K562 (cell line): ENCODE measurements at regions of chr3 and their contacts with region 1.

Region 1: GRCh38 chr3:36700537-36701248 is 63.7 kb downstream of the DCLK3 start:
- DNase-seq: peak; percentile 51 to 77 (median 62)
- ATAC-seq: peak; percentile 97
- H3K4me3 ChIP-seq: no peak overlapping the region
- H3K27ac ChIP-seq: no peak overlapping the region
- H3K4me1 ChIP-seq: no peaks in the 10 kb centered on the region
- H3K27me3 ChIP-seq: peaks cover 0 to 9% of the 10 kb centered on the region in 2 experiments; a peak in 1 of 5 replicates
- CTCF ChIP-seq: peak; percentile 75 to 95 (median 93)
- EP300 ChIP-seq: no peak
- POLR2A ChIP-seq: no peak
- RAD21 ChIP-seq: peak; percentile 96 to 97

Region 2: GRCh38 chr3:35965908-35966307 is 734.8 kb before region 1 on chr3:
- CTCF ChIA-PET with region 1: interaction called, 4 read pairs
- POLR2A ChIA-PET with region 1: no interaction called
- in situ Hi-C with region 1: no loop called
- intact Hi-C with region 1: loop called (anchors 5 kb)
- DNase-seq: no peak
- ATAC-seq: no peak
- H3K4me3 ChIP-seq: no peak overlapping the region
- H3K27ac ChIP-seq: no peak overlapping the region
- H3K4me1 ChIP-seq: no peaks in the 10 kb centered on the region
- H3K27me3 ChIP-seq: no peaks in the 10 kb centered on the region
- CTCF ChIP-seq: 0 out of 6 replicates have a peak, but pooled peaks of 1 of the 3 experiments have one; percentile 6
- EP300 ChIP-seq: no peak
- POLR2A ChIP-seq: no peak
- RAD21 ChIP-seq: peak; percentile 57 to 61

Region 3: DNA sequence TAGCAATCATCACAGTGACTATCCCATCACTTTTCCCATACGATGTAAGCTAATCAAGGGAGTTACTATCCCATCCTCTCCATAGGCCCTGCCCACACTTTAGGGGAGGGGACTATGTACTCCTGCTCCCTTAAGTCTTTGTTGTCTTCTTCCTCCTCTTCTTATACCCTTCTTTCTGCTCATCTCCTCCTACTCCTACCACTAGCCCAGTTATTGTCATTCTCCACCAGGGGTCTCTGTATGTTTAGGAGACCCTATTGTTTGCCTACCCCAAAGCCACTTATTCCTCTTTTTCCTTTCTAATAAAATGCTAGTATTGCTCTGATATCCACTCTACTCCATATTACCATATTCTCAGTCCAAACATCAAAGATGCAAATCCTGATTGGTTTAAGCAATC is 292.5 kb before region 1 on chr3:
- CTCF ChIA-PET with region 1: no interaction called
- POLR2A ChIA-PET with region 1: no interaction called
- in situ Hi-C with region 1: no loop called
- intact Hi-C with region 1: loop called (anchors 5 kb)
- DNase-seq: no peak
- ATAC-seq: no peak
- H3K4me3 ChIP-seq: no peak overlapping the region
- H3K27ac ChIP-seq: no peak overlapping the region
- H3K4me1 ChIP-seq: no peaks in the 10 kb centered on the region
- H3K27me3 ChIP-seq: no peaks in the 10 kb centered on the region
- CTCF ChIP-seq: 0 out of 6 replicates have a peak, but pooled peaks of 1 of the 3 experiments have one; percentile 3
- EP300 ChIP-seq: no peak
- POLR2A ChIP-seq: no peak
- RAD21 ChIP-seq: peak; percentile 5 to 35; a peak in 1 of 4 replicates

Region 4: GRCh38 chr3:36488077-36488789 is 212.5 kb before region 1 on chr3:
- CTCF ChIA-PET with region 1: no interaction called
- POLR2A ChIA-PET with region 1: no interaction called
- in situ Hi-C with region 1: no loop called
- intact Hi-C with region 1: no loop called
- DNase-seq: no peak
- ATAC-seq: no peak
- H3K4me3 ChIP-seq: no peak overlapping the region
- H3K27ac ChIP-seq: no peak overlapping the region
- H3K4me1 ChIP-seq: no peaks in the 10 kb centered on the region
- H3K27me3 ChIP-seq: no peaks in the 10 kb centered on the region; a peak in 1 of 5 replicates
- CTCF ChIP-seq: no peak
- EP300 ChIP-seq: no peak
- POLR2A ChIP-seq: no peak
- RAD21 ChIP-seq: no peak

Region 5: GRCh38 chr3:36606871-36607765 is 93.6 kb before region 1 on chr3:
- CTCF ChIA-PET with region 1: no interaction called
- POLR2A ChIA-PET with region 1: no interaction called
- in situ Hi-C with region 1: no loop called
- intact Hi-C with region 1: no loop called
- DNase-seq: no peak
- ATAC-seq: no peak
- H3K4me3 ChIP-seq: no peak overlapping the region
- H3K27ac ChIP-seq: no peak overlapping the region
- H3K4me1 ChIP-seq: no peaks in the 10 kb centered on the region
- H3K27me3 ChIP-seq: no peaks in the 10 kb centered on the region
- CTCF ChIP-seq: no peak
- EP300 ChIP-seq: no peak
- POLR2A ChIP-seq: no peak
- RAD21 ChIP-seq: 0 out of 4 replicates have a peak, but pooled peaks of 1 of the 2 experiments have one; percentile 11